ENCODE measurements at regions of chr3 and their contacts with region 1.

Region 1: GRCh38 chr3:151282921-151283320 is 4.6 kb upstream of the P2RY14 start:
- DNase-seq: peak in 1 of 42 donors; percentile 45

Region 2: GRCh38 chr3:151168269-151169094 is 114.4 kb before region 1 on chr3:
- intact Hi-C with region 1: loop called (anchors 5 kb)
- DNase-seq: peak; percentile 65 to 91 (median 80)

Region 3: GRCh38 chr3:151227807-151228665 is 54.9 kb before region 1 on chr3:
- intact Hi-C with region 1: loop called (anchors 5 kb)
- DNase-seq: peak; percentile 25 to 92 (median 80)

Region 4: DNA sequence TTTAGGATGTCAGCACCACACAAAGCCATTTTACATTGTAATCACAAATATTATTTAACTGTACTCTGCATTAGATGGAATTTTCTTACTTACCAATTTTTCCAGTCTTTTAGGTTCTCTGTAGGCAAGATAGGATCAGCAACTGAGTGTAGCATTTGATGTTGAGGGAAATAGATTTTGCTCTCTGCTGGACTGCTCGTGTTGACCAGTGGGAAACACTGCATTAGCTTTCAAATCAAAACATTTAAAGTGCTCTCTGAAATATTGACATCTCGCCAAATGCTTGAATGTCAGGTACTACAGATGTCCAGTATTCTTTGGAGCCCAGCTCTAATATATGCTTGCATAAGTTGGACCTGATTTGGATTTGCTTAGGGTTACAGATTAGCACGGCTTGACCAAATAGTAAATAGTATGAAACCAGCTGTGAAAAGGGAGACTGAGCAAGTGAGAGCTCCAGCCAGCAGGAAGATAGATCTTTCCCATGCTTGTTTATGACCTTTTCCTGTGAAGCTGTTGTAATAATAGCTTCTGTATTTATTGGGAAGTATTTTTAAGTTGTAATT is 34.1 kb before region 1 on chr3:
- intact Hi-C with region 1: no loop called
- DNase-seq: no peak

Region 5: GRCh38 chr3:151412989-151413388 is 130.1 kb after region 1 on chr3:
- intact Hi-C with region 1: no loop called
- DNase-seq: no peak